ENCODE measurements at regions of chr1 and their contacts with region 1.

Region 1: GRCh38 chr1:67853704-67854103 is 20.4 kb upstream of the GNG12 start:
- DNase-seq: peak; percentile 62
- H3K4me3 ChIP-seq: no peak overlapping the region
- H3K27ac ChIP-seq: no peak overlapping the region
- H3K4me1 ChIP-seq: peaks cover 15% of the 10 kb centered on the region
- H3K27me3 ChIP-seq: no peaks in the 10 kb centered on the region
- CTCF ChIP-seq: peak; percentile 95 to 98

Region 2: DNA sequence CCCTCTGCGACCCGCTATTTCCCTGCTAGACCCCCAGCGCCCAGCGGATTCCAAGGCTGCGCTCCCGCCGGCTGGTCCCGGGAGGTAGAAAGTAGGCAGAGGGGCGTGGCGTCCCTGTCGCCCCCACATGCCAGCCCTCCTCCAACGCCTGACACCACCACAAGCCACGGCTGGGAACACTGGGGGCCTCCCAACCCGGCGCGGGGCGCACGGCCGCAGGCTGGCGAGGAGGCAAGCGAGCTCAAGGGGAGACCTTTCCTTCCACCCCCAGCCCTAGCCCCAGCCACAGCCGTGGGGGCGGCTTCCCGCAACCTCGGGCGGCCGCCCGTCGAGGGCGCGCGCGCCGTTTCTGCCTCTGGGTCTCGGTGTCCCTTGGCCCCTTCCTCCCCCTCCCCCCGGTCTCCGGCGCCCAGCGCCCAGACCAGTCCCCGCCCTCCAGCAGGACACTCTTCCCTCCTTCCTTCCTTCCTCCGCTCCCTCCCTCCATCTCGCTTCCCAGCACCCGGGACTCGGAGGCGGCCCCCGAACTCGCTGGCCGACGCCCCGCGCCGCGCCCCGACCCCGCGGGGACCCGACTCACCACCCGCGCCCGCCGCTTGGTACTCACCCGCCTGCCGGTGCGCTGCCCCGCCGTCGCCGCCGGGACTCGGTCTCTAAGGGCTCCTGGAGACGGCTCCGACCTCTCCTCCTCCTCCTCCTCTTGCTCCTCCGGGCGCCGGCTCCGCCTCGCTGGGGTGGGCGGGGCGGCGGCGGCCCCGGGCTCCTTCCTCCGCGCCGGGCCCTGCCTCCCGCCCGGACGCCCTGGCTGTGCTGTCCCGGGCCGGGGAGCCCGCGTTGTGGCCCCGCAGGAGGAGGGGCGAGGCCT is 20.7 kb before region 1 on chr1 and contains the start of gene GNG12:
- CTCF ChIA-PET with region 1: interaction called, 3 read pairs
- dilution Hi-C with region 1: no loop called
- in situ Hi-C with region 1: no loop called
- intact Hi-C with region 1: loop called (anchors 1 kb)
- DNase-seq: peak; percentile 77
- H3K4me3 ChIP-seq: peak within 1 kb of the TSS; percentile 72 to 92 (median 90)
- H3K27ac ChIP-seq: peak within 1 kb of the TSS; percentile 90
- H3K4me1 ChIP-seq: peaks cover 54% of the 10 kb centered on the region
- H3K27me3 ChIP-seq: no peaks in the 10 kb centered on the region
- CTCF ChIP-seq: no peak
- total RNA-seq, gene GNG12: 130 to 183 TPM

Region 3: DNA sequence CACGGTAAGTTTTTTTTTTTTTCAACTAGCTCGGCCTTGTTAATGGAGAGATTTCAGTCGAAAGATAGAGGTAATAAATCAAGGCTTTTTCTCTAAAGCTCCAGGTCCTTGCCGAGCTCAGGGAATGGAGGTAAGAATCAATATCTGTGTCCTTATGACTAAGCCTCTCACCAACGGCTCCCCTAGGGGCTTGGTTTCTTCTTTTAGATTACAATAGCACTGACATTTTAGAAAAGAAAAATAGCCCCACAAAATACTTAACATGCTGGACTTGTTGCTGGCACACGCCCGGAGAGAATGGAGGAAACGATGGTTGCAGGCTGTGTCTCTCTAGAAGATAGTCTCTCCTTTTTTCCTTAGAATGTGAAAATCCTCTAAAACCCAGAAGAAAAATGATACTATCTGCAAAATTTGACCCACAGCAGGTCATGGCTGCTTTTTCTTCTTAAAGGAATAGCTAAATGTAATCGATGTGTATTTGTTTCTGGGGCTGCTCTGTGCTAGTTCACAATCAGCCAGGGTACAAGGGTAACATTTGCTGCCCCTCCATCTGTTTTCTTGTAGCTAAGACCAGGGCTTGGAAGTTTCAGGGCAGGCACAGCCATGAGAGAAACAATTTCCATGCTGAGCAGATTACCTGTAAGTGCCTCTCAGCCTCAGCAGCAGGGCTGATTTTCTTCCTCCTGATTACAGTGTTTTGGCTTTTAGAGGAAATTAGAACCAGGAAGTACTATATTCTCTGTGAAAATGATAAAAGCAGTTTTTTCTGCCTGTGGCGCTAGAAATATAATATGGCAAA is 65.8 kb after region 1 on chr1:
- CTCF ChIA-PET with region 1: no interaction called
- dilution Hi-C with region 1: no loop called
- in situ Hi-C with region 1: no loop called
- intact Hi-C with region 1: no loop called
- DNase-seq: no peak
- H3K4me3 ChIP-seq: no peak overlapping the region
- H3K27ac ChIP-seq: no peak overlapping the region
- H3K4me1 ChIP-seq: peaks cover 14% of the 10 kb centered on the region
- H3K27me3 ChIP-seq: no peaks in the 10 kb centered on the region
- CTCF ChIP-seq: no peak

Region 4: GRCh38 chr1:67970088-67970487 is 116.4 kb after region 1 on chr1:
- CTCF ChIA-PET with region 1: no interaction called
- dilution Hi-C with region 1: no loop called
- in situ Hi-C with region 1: no loop called
- intact Hi-C with region 1: no loop called
- DNase-seq: peak; percentile 95
- H3K4me3 ChIP-seq: no peak overlapping the region
- H3K27ac ChIP-seq: peak overlapping the region; percentile 61
- H3K4me1 ChIP-seq: peaks cover 6% of the 10 kb centered on the region
- H3K27me3 ChIP-seq: no peaks in the 10 kb centered on the region
- CTCF ChIP-seq: no peak

Region 5: GRCh38 chr1:68051475-68051874 is 197.8 kb after region 1 on chr1:
- CTCF ChIA-PET with region 1: no interaction called
- dilution Hi-C with region 1: no loop called
- in situ Hi-C with region 1: no loop called
- intact Hi-C with region 1: loop called (anchors 1 kb)
- DNase-seq: peak; percentile 67
- H3K4me3 ChIP-seq: peak overlapping the region; percentile 55 to 63 (median 57)
- H3K27ac ChIP-seq: no peak overlapping the region
- H3K4me1 ChIP-seq: peaks cover 11% of the 10 kb centered on the region
- H3K27me3 ChIP-seq: no peaks in the 10 kb centered on the region
- CTCF ChIP-seq: peak; percentile 74 to 75

Region 6: GRCh38 chr1:68111519-68112436 is 258.1 kb after region 1 on chr1:
- CTCF ChIA-PET with region 1: interaction called, 3 read pairs
- dilution Hi-C with region 1: no loop called
- in situ Hi-C with region 1: loop called (anchors 5 to 10 kb)
- intact Hi-C with region 1: loop called (anchors 1 kb)
- DNase-seq: peak; percentile 63
- H3K4me3 ChIP-seq: no peak overlapping the region
- H3K27ac ChIP-seq: no peak overlapping the region
- H3K4me1 ChIP-seq: peaks cover 27% of the 10 kb centered on the region
- H3K27me3 ChIP-seq: no peaks in the 10 kb centered on the region
- CTCF ChIP-seq: peak; percentile 64 to 75

Region 7: DNA sequence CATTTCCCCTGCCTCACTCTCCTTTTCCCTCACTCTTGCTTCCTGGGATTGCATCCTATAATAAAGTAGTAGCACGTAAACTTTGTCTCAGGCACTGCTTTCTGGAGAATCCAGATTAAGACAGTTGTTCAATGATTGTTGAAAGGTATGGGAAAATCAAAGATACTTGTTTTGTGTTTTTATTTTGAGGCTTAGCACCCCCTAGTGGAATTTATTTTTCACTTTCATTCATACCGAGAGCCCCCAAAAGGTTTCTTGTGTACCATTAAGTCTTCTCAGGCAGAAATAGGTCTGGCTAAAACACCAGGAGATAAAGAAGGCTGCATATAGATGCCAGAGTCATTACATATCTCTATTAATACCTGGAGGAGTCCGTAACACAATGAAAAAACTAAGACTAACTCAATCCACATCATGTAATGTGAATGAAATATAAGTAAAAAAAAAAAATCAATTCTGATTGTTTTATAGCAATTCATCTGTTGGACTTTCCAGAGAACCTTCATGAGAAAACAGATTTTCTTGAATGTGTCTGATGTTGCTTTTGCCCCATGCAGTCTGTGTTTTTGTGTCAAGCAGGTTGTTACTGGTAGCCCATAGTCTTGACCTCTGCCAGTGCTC is 492.6 kb after region 1 on chr1:
- CTCF ChIA-PET with region 1: no interaction called
- dilution Hi-C with region 1: loop called (anchors 25 kb)
- in situ Hi-C with region 1: loop called (anchors 25 kb)
- intact Hi-C with region 1: loop called (anchors 1 kb)
- DNase-seq: peak; percentile 18
- H3K4me3 ChIP-seq: no peak overlapping the region
- H3K27ac ChIP-seq: no peak overlapping the region
- H3K4me1 ChIP-seq: no peaks in the 10 kb centered on the region
- H3K27me3 ChIP-seq: no peaks in the 10 kb centered on the region
- CTCF ChIP-seq: peak; percentile 43 to 48

Measured in mammary epithelial cell (primary cell).